Activated CD4-positive, alpha-beta memory T cell treated with anti-CD3 and anti-CD28 coated beads, Interleukin-2, amount 10 ng/mL, durations not matched to agents 7 days and 5 days (primary cell): ENCODE measurements at regions of chr11 and their contacts with region 1.

Region 1: DNA sequence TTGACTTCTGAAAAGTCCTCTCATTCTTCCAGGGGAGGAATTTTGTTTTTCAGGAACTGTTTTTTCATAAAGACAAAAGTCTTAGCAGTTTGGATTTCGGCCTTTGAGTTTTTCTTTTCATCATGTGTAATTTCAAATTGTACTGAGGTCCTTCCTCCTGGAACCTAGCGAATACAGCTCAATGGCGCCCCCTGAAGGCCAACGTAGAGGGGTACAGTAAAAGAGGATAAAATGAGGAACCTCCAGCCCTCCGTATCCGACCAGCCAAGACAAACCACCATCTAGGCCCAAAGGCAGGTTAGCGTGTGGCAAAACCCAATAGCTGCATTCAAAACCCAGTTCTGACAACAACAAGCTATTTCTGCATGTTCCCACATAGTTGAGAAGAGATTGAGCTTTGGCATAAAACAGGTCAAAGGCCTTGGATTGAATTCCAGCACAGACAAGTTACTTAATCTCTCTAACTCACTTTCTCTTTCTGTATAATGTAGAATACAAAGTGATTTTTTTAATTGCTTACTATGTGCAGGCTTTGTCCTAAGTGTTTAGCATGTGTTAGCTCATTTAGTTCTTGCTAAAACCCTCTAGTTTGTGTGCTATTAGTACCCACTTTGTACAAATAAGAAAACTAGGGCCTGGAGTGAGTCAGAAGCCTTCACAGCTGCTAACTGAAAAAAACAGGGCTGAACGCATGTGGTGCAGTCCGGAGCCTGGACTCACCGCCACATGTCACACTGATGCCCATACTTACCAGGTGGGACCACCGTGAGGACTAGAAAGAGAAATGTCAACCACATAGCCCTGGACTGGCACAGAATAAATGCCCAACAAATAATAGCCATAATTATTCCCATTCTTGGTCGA is 43.2 kb upstream of the ETS1 start:
- DNase-seq: peak; percentile 91
- H3K4me3 Mint-ChIP-seq: peak overlapping the region; percentile 38
- H3K27ac Mint-ChIP-seq: peak overlapping the region; percentile 85
- H3K4me1 Mint-ChIP-seq: peaks cover 63% of the 10 kb centered on the region
- H3K27me3 Mint-ChIP-seq: no peaks in the 10 kb centered on the region

Region 2: DNA sequence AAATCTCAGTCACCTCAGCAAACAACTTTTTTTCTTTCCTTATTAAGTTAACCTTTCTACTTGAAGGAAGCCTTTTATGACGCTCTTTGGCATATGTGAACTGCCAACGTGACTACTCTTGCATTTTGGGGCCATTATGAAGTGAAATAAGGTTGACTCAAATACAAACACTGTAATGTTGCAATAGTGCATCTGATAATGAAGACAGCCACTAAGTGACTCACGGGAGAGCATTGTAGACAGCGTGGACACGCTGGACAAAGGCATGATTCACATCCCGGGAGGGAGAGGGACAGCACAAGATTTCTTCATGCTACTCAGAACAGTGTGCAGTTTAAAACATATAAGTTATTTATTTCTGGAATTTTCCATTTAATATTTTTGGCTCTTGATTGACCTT is 604.0 kb before region 1 on chr11:
- CTCF ChIA-PET with region 1: interaction called, 10 read pairs
- POLR2A ChIA-PET with region 1: no interaction called
- DNase-seq: no peak
- H3K4me3 Mint-ChIP-seq: no peak overlapping the region
- H3K27ac Mint-ChIP-seq: no peak overlapping the region
- H3K4me1 Mint-ChIP-seq: peaks cover 16% of the 10 kb centered on the region
- H3K27me3 Mint-ChIP-seq: peaks cover 20% of the 10 kb centered on the region

Region 3: DNA sequence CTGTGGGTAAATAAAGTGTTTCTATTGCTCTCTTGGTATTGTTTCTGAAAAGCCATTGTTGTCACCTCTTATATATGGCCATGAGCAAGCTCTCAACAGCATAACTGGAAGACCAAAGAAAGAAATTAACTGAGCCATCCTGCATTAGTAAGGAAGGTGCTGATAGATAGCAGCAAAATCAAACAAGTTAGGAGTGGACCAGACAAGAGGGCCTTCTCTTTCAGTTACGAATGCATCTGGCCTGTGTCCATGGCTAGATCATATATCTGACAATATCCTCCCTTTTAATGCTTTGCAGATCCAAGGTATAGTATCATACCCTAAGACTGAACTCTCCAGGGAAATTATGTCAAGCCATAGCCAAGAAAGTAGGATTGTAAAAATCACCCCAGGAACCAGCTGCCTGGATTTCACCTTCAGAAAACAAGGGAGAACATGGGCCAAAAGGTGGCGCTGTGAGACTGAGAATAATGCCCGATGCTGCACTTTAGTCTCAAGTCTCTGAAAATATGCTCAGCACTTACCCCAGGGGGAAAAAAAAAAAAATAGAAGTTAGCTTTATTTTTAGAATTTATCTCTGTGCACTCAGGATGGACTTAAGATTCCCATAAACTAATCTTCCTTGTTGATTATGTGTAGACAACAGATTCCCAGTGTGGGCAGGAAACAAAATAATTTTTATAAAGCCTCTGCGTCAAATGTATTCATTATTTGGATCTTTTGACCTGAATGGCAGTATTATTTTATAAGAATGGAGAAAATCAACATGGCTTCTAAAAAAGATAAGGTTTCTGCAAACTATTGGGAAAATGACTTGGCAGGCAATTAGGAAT is 458.3 kb before region 1 on chr11:
- CTCF ChIA-PET with region 1: interaction called, 205 read pairs
- POLR2A ChIA-PET with region 1: interaction called, 4 read pairs
- DNase-seq: peak; percentile 87
- H3K4me3 Mint-ChIP-seq: no peak overlapping the region
- H3K27ac Mint-ChIP-seq: no peak overlapping the region
- H3K4me1 Mint-ChIP-seq: peaks cover 13% of the 10 kb centered on the region
- H3K27me3 Mint-ChIP-seq: peaks cover 7% of the 10 kb centered on the region

Region 4: GRCh38 chr11:128463371-128463829 is 167.2 kb before region 1 on chr11:
- CTCF ChIA-PET with region 1: interaction called, 12 read pairs
- POLR2A ChIA-PET with region 1: interaction called, 10 read pairs
- DNase-seq: no peak
- H3K4me3 Mint-ChIP-seq: peak overlapping the region; percentile 9
- H3K27ac Mint-ChIP-seq: peak overlapping the region; percentile 80
- H3K4me1 Mint-ChIP-seq: peaks cover 86% of the 10 kb centered on the region
- H3K27me3 Mint-ChIP-seq: no peaks in the 10 kb centered on the region

Region 5: GRCh38 chr11:128482512-128483191 is 147.9 kb before region 1 on chr11:
- CTCF ChIA-PET with region 1: interaction called, 16 read pairs
- POLR2A ChIA-PET with region 1: interaction called, 6 read pairs
- DNase-seq: peak; percentile 59
- H3K4me3 Mint-ChIP-seq: peak overlapping the region; percentile 67
- H3K27ac Mint-ChIP-seq: peak overlapping the region; percentile 92
- H3K4me1 Mint-ChIP-seq: peaks cover 95% of the 10 kb centered on the region
- H3K27me3 Mint-ChIP-seq: no peaks in the 10 kb centered on the region

Region 6: DNA sequence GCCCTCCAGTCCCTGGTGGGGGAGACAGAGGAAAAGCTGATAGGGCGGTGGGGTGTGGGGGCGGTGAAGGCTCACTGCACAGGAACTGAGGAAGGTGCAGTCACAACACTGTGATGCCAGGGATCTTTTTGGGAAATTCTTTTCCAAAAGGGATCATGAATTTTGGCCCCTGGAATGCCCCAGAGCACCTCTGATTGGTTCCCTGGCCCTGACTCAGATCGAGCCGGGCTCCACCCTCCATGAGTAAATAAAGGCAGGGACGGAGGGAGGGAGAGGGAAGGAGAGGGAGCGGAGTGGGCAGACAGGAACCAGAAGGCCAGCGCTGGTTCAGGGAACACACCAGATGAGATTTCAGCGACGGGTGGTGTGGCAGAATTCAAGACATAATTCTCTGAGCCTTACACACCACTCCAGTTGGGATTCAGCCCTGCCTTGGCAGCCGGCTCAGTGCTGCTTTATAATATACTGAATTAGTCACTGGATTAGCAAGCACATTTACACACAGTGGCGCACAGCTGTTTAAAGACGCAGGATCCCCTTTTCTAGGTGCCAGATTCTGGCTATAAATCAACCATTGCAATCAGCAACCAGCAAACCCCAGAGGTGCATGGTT is 123.5 kb before region 1 on chr11:
- CTCF ChIA-PET with region 1: interaction called, 80 read pairs
- POLR2A ChIA-PET with region 1: interaction called, 57 read pairs
- DNase-seq: no peak
- H3K4me3 Mint-ChIP-seq: peak overlapping the region; percentile 69
- H3K27ac Mint-ChIP-seq: peak overlapping the region; percentile 71
- H3K4me1 Mint-ChIP-seq: peaks cover 99% of the 10 kb centered on the region
- H3K27me3 Mint-ChIP-seq: no peaks in the 10 kb centered on the region

Region 7: GRCh38 chr11:128757235-128757711 is 126.7 kb after region 1 on chr11:
- CTCF ChIA-PET with region 1: interaction called, 54 read pairs
- POLR2A ChIA-PET with region 1: interaction called, 6 read pairs
- DNase-seq: peak; percentile 77
- H3K4me3 Mint-ChIP-seq: peak overlapping the region; percentile 24
- H3K27ac Mint-ChIP-seq: peak overlapping the region; percentile 87
- H3K4me1 Mint-ChIP-seq: peaks cover 75% of the 10 kb centered on the region
- H3K27me3 Mint-ChIP-seq: no peaks in the 10 kb centered on the region

Region 8: GRCh38 chr11:128890543-128891368 is 260.2 kb after region 1 on chr11 and contains the start of gene KCNJ5:
- CTCF ChIA-PET with region 1: no interaction called
- POLR2A ChIA-PET with region 1: no interaction called
- DNase-seq: no peak
- H3K4me3 Mint-ChIP-seq: peak within 1 kb of the TSS; percentile 36
- H3K27ac Mint-ChIP-seq: no peak within 1 kb of the TSS
- H3K4me1 Mint-ChIP-seq: peaks cover 17% of the 10 kb centered on the region
- H3K27me3 Mint-ChIP-seq: peaks cover 66% of the 10 kb centered on the region
- total RNA-seq, gene KCNJ5: not detected